Mammary epithelial cell (primary cell): ENCODE measurements at regions of chr15 and their contacts with region 1.

Region 1: DNA sequence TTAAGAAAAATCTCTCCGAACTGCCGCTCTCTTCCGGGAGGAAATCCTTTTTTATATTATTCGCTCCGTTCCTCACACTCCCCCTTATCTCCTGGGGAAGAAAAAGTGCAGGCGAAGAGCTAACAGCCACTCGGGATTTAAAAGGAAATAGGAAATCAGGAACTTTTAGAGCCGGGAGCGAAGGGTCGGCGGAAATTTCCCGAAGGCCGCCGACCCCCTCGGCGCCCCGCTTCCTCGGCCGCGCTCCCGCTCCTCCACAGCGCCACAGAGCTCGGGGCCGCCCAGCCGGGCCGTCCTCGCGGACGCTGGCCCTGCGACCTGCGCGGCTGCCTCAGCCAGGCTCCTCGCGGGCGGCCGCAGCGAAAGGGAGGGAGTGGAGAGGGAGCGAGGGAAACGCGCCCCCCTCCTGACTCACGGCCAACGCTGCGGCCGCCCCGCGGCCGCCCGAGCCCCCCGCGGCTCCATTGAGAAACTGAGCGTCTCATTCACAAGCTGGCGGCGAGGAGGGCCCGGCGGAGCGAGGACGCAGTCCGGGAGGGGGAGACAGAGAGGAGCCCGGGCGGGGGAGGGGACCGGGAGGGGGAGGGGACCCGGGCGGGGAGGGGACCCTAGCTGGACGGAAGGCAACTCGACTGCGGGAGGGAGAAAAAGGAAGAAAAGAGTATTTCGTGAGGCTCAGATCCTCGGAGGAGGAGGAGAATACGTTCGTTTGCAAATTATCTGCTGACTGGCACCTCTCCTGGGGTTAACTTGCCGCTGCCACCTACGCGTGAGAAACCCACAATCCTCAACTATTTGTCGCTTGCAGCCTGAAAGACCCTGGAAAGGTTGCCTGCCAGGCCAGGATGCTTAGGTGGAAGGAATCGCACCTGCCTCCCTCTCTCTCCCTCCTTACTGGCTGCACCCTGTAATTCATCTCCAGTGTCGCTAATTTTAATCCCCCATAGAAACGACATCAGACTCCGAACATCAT is at the start of gene PTPN9:
- DNase-seq: peak; percentile 39
- H3K4me3 ChIP-seq: peak within 1 kb of the TSS; percentile 72 to 94 (median 76)
- H3K27ac ChIP-seq: peak within 1 kb of the TSS; percentile 78
- H3K4me1 ChIP-seq: peaks cover 4% of the 10 kb centered on the region
- H3K27me3 ChIP-seq: no peaks in the 10 kb centered on the region
- CTCF ChIP-seq: peak in 1 of 2 donors; percentile 54
- total RNA-seq, gene PTPN9: 26.7 to 38.0 TPM

Region 2: GRCh38 chr15:75508840-75509532 is 70.2 kb before region 1 on chr15:
- CTCF ChIA-PET with region 1: no interaction called
- dilution Hi-C with region 1: loop called (anchors 5 kb)
- in situ Hi-C with region 1: no loop called
- intact Hi-C with region 1: loop called (anchors 2 kb)
- DNase-seq: peak; percentile 13
- H3K4me3 ChIP-seq: no peak overlapping the region
- H3K27ac ChIP-seq: no peak overlapping the region
- H3K4me1 ChIP-seq: no peaks in the 10 kb centered on the region
- H3K27me3 ChIP-seq: no peaks in the 10 kb centered on the region
- CTCF ChIP-seq: peak; percentile 32 to 56

Region 3: DNA sequence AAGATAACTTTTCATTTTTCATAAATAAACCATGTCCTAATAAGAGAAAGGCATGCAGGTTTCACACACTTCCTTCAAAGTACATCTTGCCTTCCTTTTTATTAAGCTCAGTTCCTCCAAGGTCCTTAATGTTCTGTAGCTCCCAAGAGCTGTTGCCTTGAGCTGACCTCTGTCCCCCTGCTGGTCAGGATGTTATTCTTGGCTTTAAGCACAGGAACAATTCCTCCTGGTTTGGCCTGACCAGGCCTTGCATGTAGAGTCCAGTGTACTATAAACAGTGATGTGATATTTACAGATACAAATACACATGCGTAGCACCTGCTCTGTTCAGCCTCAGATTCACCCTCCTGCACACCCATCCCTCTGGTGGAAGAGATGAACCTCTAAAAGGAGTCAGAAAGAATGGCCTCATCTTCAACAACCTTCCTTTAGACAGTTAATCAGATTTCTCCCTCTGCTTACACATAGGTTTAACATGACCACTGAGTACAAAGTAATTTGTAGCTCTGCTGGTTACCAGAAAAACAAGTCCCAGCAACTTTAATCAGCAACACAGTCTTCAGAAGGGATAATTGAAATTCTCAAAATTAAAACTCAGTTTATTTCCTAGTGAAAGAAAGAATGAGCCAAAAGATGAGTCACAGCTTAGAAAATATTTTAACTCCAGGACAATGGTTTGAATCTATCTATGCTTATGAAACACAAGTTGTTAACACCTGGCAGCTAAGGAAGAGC is 46.7 kb before region 1 on chr15:
- CTCF ChIA-PET with region 1: interaction called, 15 read pairs
- dilution Hi-C with region 1: no loop called
- in situ Hi-C with region 1: no loop called
- intact Hi-C with region 1: no loop called
- DNase-seq: peak; percentile 51
- H3K4me3 ChIP-seq: no peak overlapping the region
- H3K27ac ChIP-seq: peak overlapping the region; percentile 0
- H3K4me1 ChIP-seq: peaks cover 27% of the 10 kb centered on the region
- H3K27me3 ChIP-seq: no peaks in the 10 kb centered on the region
- CTCF ChIP-seq: peak; percentile 34 to 47

Region 4: DNA sequence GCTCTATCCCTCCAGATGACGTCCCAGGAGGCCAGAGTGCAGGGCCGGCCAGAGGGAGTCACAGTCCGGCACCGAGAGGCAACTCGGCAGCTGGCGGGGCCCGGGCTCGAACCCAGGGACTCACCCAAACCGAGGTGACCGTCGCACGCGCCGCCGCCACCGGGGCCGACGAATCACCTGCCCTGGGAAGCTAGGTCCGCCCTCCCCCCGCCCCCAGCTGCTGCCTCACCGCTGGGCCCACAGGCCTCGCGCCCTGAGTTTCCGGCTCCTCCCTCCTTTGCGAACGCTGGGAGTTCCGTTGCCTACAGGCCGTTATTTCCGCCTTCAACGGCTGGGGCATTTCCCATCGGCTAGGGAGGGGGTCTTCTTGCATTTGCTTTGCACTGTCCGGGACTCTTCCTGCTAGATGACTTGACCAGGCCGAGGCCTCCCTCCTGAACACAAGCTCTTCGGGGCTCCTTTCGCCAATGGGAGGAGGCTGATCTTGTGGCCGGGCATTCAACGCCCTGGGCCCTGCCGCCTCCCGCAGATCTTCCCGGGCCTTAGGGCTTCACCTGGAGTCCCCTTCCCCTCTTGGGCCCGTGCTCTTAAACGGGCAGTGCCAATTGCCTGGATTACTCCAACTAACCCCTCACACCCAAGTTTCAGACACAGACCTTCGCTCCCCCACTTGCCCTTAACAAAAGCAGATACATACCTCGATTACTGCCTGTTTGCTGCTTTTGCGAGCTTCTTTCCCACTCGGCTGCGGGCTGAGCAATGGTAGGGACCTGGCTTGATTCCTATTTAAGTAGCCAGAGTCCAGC is 46.5 kb after region 1 on chr15 and contains the start of gene SNUPN:
- CTCF ChIA-PET with region 1: interaction called, 4 read pairs
- dilution Hi-C with region 1: no loop called
- in situ Hi-C with region 1: no loop called
- intact Hi-C with region 1: loop called (anchors 5 kb)
- DNase-seq: peak; percentile 87
- H3K4me3 ChIP-seq: peak within 1 kb of the TSS; percentile 65 to 100 (median 96)
- H3K27ac ChIP-seq: peak within 1 kb of the TSS; percentile 82
- H3K4me1 ChIP-seq: peaks cover 26% of the 10 kb centered on the region
- H3K27me3 ChIP-seq: no peaks in the 10 kb centered on the region
- CTCF ChIP-seq: no peak
- total RNA-seq, gene SNUPN: 16.5 to 21.5 TPM